ENCODE measurements at regions of chr7 and their contacts with region 1.

Region 1: GRCh38 chr7:80392229-80393169 is 119.4 kb downstream of the GNAT3 start:
- DNase-seq: peak in 2 of 42 donors; percentile 4 to 6

Region 2: GRCh38 chr7:80087051-80087770 is 305.3 kb before region 1 on chr7:
- intact Hi-C with region 1: loop called (anchors 10 kb)
- DNase-seq: no peak

Region 3: DNA sequence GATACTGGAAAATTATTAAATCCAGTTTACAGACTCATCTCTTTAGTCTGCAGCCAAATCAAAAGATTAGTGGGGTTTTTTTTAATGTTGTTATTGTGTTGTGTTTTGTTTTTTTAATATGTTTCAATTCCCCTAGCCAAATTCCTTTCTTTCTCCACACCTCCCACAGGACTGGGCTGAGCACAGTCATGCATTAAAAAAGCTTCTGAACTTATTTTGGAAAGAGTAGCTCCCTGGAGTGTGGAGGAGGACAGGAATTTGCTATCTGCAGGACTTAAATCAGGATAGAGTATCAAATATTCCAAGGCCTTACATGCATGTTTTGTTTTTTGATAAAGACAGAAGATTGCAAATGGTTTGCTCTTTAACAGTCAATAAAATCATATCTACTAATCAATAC is 167.1 kb before region 1 on chr7:
- intact Hi-C with region 1: no loop called
- DNase-seq: no peak

Measured in head of caudate nucleus (tissue), 42 donors.